Astrocyte of the cerebellum (primary cell): ENCODE measurements at regions of chr1 and their contacts with region 1.

Region 1: DNA sequence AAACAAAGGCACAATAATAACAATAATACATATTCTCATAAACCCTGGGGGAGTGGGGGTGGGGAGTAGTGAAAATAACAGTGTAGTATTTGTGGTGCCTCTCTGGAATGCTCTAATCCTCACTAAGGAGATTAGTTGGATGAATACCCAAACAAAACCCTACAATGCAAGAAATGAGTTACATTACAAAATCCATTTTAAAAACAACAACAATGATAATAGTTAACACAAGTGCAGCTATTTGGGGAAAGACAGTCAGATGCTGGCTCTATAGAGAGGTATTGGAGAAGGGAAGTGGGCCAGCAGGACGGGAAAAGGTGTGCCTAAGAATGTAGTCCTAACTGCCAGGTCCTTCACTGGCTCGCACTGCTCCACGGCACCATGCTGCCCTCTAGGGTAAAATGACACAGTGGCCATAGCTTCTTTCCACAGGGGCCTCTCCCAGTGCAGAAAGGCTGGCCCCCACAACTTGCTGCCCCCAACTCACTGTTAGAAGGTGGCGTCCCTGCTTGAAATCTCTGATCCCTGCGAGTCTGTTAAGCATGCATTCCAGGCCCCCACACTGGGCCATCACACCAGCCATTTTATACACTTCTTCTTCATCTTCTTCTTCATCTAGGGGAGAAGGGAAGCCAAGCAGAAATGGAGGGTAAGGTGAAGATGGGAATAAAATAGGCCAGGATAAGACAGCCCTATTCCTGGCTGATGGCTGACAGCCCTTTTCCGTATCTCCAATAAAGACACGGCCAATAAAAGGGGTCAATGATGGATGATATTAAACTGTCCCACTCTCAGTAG is 113.8 kb downstream of the UBR4 start:
- DNase-seq: no peak
- H3K4me3 ChIP-seq: no peak overlapping the region
- CTCF ChIP-seq: peak; percentile 58

Region 2: DNA sequence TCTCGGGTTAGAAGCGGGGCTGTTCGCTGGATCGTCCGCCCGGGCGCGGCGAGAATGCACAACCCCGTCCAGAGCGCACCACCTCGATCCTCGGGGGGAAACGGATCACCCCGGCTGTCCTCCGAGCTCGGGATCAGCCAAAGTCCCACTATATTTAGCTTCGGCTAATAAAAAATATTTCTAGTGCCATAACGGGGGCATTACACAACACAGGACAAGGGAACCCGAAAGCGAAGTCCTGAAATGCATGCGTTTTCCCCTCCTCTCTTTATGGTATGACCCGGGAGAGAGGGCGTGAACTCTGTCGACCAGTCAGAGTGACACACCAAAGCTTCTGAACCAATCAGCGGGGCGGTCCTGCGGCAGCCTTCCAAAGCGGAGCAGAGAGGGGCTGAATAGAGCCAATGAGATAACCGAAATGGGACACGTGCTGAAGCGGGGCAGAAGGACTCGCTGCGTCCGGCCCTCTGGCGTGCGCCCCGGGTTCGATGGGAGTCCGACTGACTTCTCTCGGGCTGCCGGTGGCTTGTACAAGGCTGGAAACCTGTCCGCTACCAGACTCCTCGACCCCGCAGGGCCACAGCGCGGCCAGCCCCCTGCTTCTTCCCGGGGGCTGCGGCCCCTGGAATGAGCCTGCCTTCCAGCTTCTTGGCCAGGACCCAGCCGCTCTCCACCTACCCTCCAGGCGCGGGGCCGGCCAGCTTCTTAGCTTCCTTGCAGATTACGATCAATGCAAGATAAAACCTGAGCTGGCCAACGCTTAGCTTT is 193.5 kb before region 1 on chr1 and contains the start of gene ALDH4A1:
- in situ Hi-C with region 1: loop called (anchors 10 kb)
- DNase-seq: peak; percentile 97
- H3K4me3 ChIP-seq: peak within 1 kb of the TSS; percentile 71
- CTCF ChIP-seq: no peak

Region 3: DNA sequence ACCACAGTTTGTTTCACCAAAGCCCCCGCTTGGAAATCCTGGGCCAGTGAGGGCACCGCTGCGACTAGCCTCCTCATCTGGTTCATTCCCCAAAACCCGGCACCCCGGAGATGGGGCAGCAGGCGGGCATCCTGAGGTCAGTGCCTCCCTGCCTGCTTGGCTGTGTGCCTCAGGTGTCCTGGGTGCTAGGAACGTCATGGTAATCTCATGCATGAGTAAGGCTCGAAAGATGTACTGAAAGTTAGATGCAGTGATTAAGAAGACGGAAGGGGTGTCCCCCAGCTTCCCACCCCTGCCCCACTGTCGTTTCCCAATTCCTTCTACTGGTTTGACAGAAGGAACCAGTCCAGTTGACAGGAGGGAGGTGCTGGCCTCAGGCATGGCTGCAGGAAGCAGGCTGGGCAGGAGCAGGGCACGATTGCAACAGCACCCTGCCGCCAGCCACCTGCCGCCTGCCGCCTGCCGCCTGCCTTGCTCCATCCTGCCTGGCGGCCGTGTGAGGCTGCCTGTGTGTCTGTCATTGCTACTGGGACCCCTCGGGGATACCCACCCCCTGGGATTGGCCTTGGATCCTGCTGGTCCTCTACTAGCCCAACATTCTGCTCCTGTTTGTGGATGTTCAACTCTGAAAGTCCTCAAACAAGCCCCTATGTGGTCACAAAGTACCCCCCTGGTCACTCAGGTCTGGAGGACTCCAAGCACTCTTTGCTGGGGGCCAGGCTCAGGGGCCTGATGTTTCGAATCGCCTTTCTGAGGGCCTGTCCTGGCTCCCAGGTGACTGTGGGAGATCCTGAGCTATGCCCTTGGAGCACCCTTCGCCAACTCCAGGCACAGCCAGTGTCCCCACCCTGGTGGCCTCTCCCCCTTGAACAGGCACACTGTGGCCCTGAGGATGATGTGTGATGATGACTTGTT is 66.8 kb before region 1 on chr1:
- in situ Hi-C with region 1: no loop called
- DNase-seq: no peak
- H3K4me3 ChIP-seq: no peak overlapping the region
- CTCF ChIP-seq: no peak

Region 4: DNA sequence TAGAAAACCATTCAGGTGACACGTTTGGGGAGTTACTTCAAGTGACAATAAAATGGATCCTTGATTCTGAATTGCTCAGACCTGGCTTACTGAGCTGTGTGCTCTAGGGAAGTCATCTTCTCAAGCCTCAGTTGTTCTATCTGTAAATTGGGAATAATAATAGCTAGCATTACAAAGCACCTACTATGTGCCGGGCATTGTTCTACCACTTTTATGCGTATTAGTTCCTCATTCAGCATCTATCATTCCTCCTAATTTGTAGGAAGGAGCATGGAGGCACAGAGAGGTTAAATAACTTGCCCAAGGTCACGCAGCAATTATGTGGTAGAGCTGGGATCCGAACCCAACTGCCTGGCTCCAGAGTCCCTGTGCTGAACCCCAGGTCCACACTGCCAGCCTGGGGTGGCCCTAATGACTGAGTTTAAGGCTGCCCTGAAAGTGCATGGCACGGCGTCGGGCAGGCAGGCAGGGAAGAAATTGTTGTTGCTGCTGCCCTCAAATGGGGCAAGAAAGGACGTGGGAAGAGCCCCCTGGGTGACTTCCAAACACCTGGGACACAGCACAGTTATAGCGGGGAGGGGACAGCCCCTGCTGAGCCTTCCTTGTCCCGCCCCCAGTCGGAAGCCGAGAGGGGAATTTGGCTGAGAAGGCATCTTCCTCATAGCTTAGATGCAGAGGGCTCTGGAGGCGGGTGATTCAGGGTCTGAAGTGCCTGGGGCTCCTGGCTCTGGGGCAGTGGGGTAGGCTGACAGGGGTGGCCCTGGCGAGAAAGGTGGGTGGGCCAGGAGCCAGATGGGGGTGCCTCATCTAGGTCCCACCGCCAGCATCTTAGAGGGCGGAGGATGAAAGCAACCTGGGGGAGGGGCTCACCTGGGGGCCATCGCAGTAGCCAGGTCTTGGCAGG is 53.3 kb before region 1 on chr1:
- in situ Hi-C with region 1: no loop called
- DNase-seq: no peak
- H3K4me3 ChIP-seq: no peak overlapping the region
- CTCF ChIP-seq: no peak

Region 5: GRCh38 chr1:19140465-19140864 is 44.2 kb after region 1 on chr1:
- in situ Hi-C with region 1: no loop called
- DNase-seq: no peak
- H3K4me3 ChIP-seq: no peak overlapping the region
- CTCF ChIP-seq: no peak

Region 6: GRCh38 chr1:19169642-19170041 is 73.4 kb after region 1 on chr1:
- in situ Hi-C with region 1: loop called (anchors 5 kb)
- DNase-seq: no peak
- H3K4me3 ChIP-seq: no peak overlapping the region
- CTCF ChIP-seq: no peak